ENCODE measurements at regions of chr2 and their contacts with region 1.

Region 1: DNA sequence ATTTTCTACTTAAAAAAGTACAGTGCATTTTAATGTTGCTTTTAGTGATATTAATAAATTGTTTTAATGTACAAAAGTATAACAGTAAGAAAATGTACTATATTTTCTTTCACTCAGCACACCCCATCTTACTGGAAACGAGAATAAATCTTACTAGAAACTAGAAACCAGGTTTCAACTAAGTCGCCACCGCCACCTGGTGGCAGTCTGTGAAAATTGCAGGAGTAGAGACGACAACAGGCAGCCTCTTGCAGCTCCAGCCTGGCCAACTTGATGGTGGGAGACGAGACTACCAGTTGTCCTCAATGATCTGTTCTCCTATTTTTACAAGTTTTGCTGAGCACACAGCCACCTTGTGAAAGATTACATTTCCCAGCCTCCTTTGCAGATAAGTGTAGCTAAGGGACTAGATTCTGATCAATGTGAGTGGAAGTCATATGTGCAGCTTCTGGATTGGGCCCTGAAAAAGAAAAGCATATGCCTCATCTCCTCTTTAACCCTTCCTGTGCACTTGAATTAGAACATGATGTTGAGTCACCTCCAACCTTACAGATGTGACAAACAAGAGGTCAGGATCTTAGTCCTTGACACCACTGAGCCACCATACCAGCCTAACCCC is 8.7 kb downstream of the OTOF start:
- DNase-seq: peak; percentile 74
- ATAC-seq: peak; percentile 70
- H3K4me3 ChIP-seq: no peak overlapping the region
- H3K27ac ChIP-seq: no peak overlapping the region
- H3K4me1 ChIP-seq: no peaks in the 10 kb centered on the region
- H3K27me3 ChIP-seq: no peaks in the 10 kb centered on the region
- CTCF ChIP-seq: peak; percentile 81 to 87 (median 84)
- POLR2A ChIP-seq: no peak
- RAD21 ChIP-seq: peak; percentile 91

Region 2: DNA sequence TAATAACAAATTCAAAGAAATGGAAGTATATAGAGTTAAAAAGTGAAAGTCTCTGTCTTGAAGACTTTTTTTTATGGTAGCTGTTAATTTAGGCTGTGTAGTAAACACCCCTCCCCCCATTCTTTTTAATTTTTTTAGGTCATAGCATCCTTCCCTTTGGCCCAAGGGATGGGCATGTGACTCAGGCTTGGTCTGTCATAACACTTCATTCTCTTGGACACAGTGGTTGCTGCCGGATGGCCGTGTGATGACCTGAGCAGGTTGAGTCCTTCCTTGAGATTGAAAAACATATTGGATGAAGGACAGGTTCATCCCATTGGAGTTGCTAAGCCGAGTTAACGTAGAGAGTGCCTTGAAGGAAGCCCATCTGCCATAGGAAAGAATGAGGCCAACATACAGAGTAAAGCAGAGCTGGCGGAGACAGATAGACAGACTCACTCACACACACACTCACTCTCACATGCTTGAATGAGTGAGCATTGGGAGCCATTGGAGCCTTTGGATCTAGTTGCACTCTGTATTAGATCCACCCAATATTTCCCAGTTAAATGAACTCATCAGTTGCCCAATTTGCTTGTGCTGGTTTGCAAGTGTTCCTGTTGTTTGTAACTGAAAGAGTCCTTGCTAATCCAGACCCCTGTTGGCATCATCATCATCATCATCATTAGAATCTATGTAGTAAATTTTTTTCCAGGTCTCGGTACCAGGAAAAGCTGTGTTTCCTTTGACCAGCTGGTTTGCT is 1963.5 kb before region 1 on chr2:
- CTCF ChIA-PET with region 1: no interaction called
- POLR2A ChIA-PET with region 1: no interaction called
- RAD21 ChIA-PET with region 1: no interaction called
- intact Hi-C with region 1: no loop called
- DNase-seq: no peak
- ATAC-seq: no peak
- H3K4me3 ChIP-seq: no peak overlapping the region
- H3K27ac ChIP-seq: no peak overlapping the region
- H3K4me1 ChIP-seq: no peaks in the 10 kb centered on the region
- H3K27me3 ChIP-seq: no peaks in the 10 kb centered on the region
- CTCF ChIP-seq: no peak
- POLR2A ChIP-seq: no peak
- RAD21 ChIP-seq: no peak

Region 3: DNA sequence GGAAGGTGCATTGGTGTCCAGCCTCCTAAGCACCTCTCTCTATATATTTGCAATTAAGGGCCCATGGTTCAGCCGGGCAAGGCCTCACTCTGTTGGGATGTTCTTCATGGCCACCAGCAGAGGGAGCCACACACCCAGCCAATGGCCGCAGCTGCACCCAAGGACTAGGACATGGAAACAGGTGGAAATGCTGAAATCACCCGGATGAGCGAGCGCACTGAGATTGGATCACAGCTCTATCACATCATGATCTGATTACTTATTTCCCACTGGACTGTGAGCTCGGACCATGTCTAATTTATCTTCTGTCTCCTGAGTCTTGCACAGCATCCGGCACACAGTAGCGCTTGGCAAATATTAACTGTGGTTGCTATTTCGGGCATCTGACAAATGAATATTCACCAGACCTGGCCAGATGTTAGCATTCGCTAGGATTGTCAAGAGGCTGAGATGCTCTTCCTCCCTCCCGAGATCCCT is 518.1 kb before region 1 on chr2:
- CTCF ChIA-PET with region 1: interaction called, 3 read pairs
- POLR2A ChIA-PET with region 1: no interaction called
- RAD21 ChIA-PET with region 1: no interaction called
- intact Hi-C with region 1: loop called (anchors 2 kb)
- DNase-seq: peak; percentile 88
- ATAC-seq: peak; percentile 97
- H3K4me3 ChIP-seq: peak overlapping the region in 1 of 2 experiments; percentile 10; a peak in 2 of 4 replicates
- H3K27ac ChIP-seq: no peak overlapping the region
- H3K4me1 ChIP-seq: peaks cover 0 to 12% of the 10 kb centered on the region in 2 experiments; a peak in 1 of 4 replicates
- H3K27me3 ChIP-seq: no peaks in the 10 kb centered on the region
- CTCF ChIP-seq: peak; percentile 89 to 97 (median 93)
- POLR2A ChIP-seq: no peak
- RAD21 ChIP-seq: peak; percentile 100

Region 4: GRCh38 chr2:26114151-26114550 is 355.1 kb before region 1 on chr2:
- CTCF ChIA-PET with region 1: no interaction called
- POLR2A ChIA-PET with region 1: no interaction called
- RAD21 ChIA-PET with region 1: no interaction called
- intact Hi-C with region 1: no loop called
- DNase-seq: no peak
- ATAC-seq: no peak
- H3K4me3 ChIP-seq: no peak overlapping the region
- H3K27ac ChIP-seq: no peak overlapping the region
- H3K4me1 ChIP-seq: no peaks in the 10 kb centered on the region
- H3K27me3 ChIP-seq: no peaks in the 10 kb centered on the region
- CTCF ChIP-seq: no peak
- POLR2A ChIP-seq: no peak
- RAD21 ChIP-seq: no peak

Region 5: GRCh38 chr2:26170795-26171194 is 298.4 kb before region 1 on chr2:
- CTCF ChIA-PET with region 1: no interaction called
- POLR2A ChIA-PET with region 1: interaction called, 3 read pairs
- RAD21 ChIA-PET with region 1: no interaction called
- intact Hi-C with region 1: loop called (anchors 2 kb)
- DNase-seq: no peak
- ATAC-seq: no peak
- H3K4me3 ChIP-seq: no peak overlapping the region
- H3K27ac ChIP-seq: no peak overlapping the region
- H3K4me1 ChIP-seq: peaks cover 0 to 12% of the 10 kb centered on the region in 2 experiments; a peak in 1 of 4 replicates
- H3K27me3 ChIP-seq: no peaks in the 10 kb centered on the region
- CTCF ChIP-seq: no peak
- POLR2A ChIP-seq: no peak
- RAD21 ChIP-seq: no peak

Region 6: DNA sequence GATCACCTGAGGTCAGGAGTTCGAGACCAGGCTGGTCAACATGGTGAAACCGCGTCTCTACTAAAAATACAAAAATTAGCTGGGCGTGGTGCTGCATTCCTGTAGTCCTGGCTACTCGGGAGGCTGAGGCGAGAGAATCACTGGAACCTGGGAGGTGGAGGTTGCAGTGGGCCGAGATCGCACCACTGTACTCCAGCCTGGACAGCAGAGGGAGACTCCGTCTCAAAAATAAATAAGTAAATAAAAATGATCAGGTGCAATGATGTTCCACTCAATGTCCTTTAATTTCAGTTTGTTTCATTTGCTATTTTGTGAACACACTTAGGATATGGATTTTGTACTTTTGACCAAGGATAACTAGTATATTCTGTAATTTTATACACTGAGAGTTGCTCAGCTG is 234.1 kb before region 1 on chr2:
- CTCF ChIA-PET with region 1: no interaction called
- POLR2A ChIA-PET with region 1: no interaction called
- RAD21 ChIA-PET with region 1: interaction called in 1 of 2 experiments, 3 read pairs
- intact Hi-C with region 1: loop called (anchors 2 kb)
- DNase-seq: no peak
- ATAC-seq: peak; percentile 49; the same call in 1 of the 2 replicates
- H3K4me3 ChIP-seq: no peak overlapping the region
- H3K27ac ChIP-seq: no peak overlapping the region
- H3K4me1 ChIP-seq: no peaks in the 10 kb centered on the region
- H3K27me3 ChIP-seq: no peaks in the 10 kb centered on the region
- CTCF ChIP-seq: peak; percentile 29 to 40 (median 39); a peak in 5 of 6 replicates
- POLR2A ChIP-seq: no peak
- RAD21 ChIP-seq: peak; percentile 65

Region 7: DNA sequence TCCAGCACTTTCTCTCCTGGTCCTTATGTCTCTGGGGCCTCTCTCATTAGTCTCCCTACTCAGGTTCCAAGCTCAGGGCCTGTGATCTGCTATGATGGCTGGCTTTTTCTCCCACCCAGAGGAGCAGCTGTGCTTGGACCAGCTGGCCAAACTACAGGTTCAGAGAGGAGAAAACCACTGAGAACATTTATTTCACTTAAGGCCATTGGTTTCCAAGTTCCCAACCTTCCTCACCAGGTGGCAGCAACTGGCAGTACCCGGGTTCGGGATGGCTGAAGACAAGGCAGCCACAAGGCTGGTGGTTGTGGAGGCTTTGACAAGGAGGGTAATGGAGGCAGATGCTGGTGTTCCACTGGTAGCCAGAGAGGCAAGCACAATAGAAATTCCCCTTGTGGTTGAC is 153.2 kb before region 1 on chr2:
- CTCF ChIA-PET with region 1: interaction called, 9 read pairs
- POLR2A ChIA-PET with region 1: no interaction called
- RAD21 ChIA-PET with region 1: interaction called in 1 of 2 experiments, 5 read pairs
- intact Hi-C with region 1: loop called (anchors 1 kb)
- DNase-seq: peak; percentile 15
- ATAC-seq: peak; percentile 77
- H3K4me3 ChIP-seq: no peak overlapping the region
- H3K27ac ChIP-seq: no peak overlapping the region
- H3K4me1 ChIP-seq: no peaks in the 10 kb centered on the region
- H3K27me3 ChIP-seq: peaks cover 3% of the 10 kb centered on the region; the same call in 1 of the 2 replicates
- CTCF ChIP-seq: peak; percentile 49 to 79 (median 49)
- POLR2A ChIP-seq: no peak
- RAD21 ChIP-seq: peak; percentile 75

Measured in HCT116 (cell line).